ENCODE measurements at regions of chr10 and their contacts with region 1.

Region 1: GRCh38 chr10:2509081-2509531 is 558.2 kb upstream of the PFKP start:
- DNase-seq: no peak
- ATAC-seq: no peak
- H3K4me3 ChIP-seq: no peak overlapping the region
- H3K4me3 Mint-ChIP-seq: no peak overlapping the region
- H3K27ac ChIP-seq: no peak overlapping the region
- H3K27ac Mint-ChIP-seq: no peak overlapping the region
- H3K4me1 ChIP-seq: no peaks in the 10 kb centered on the region
- H3K4me1 Mint-ChIP-seq: no peaks in the 10 kb centered on the region
- H3K27me3 ChIP-seq: no peaks in the 10 kb centered on the region
- H3K27me3 Mint-ChIP-seq: peaks cover 2% of the 10 kb centered on the region
- CTCF ChIP-seq: no peak

Region 2: GRCh38 chr10:2490141-2490540 is 19.0 kb before region 1 on chr10:
- CTCF ChIA-PET with region 1: no interaction called
- POLR2A ChIA-PET with region 1: no interaction called
- intact Hi-C with region 1: loop called in 1 of 2 experiments (anchors 2 kb)
- DNase-seq: no peak
- ATAC-seq: no peak
- H3K4me3 ChIP-seq: no peak overlapping the region
- H3K4me3 Mint-ChIP-seq: no peak overlapping the region
- H3K27ac ChIP-seq: no peak overlapping the region
- H3K27ac Mint-ChIP-seq: no peak overlapping the region
- H3K4me1 ChIP-seq: no peaks in the 10 kb centered on the region
- H3K4me1 Mint-ChIP-seq: no peaks in the 10 kb centered on the region
- H3K27me3 ChIP-seq: no peaks in the 10 kb centered on the region
- H3K27me3 Mint-ChIP-seq: no peaks in the 10 kb centered on the region
- CTCF ChIP-seq: no peak

Region 3: DNA sequence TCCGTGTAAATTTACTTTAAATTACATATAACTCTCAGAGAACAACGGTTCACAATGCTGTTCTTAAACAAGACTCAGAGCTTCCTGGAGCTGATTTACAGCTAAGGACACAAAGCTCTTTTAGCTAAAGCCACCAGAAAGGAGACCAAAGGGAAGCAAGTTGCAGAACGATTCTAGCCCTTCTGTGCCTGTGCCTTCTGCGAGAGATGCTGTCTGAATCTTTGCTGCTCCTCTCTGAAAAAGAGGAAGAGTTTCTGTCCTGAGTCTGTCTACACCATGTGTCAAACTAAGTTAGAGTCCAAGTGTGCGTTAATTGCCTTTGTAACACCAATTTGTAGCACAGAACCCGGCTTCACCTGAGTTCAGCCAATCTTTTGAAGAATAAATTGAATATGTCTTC is 516.2 kb after region 1 on chr10:
- CTCF ChIA-PET with region 1: no interaction called
- POLR2A ChIA-PET with region 1: no interaction called
- intact Hi-C with region 1: no loop called
- DNase-seq: no peak
- ATAC-seq: no peak
- H3K4me3 ChIP-seq: no peak overlapping the region
- H3K4me3 Mint-ChIP-seq: no peak overlapping the region
- H3K27ac ChIP-seq: no peak overlapping the region
- H3K27ac Mint-ChIP-seq: no peak overlapping the region
- H3K4me1 ChIP-seq: no peaks in the 10 kb centered on the region
- H3K4me1 Mint-ChIP-seq: no peaks in the 10 kb centered on the region
- H3K27me3 ChIP-seq: peaks cover 0 to 4% of the 10 kb centered on the region in 2 experiments
- H3K27me3 Mint-ChIP-seq: peaks cover 23% of the 10 kb centered on the region
- CTCF ChIP-seq: no peak

Measured in CD8-positive, alpha-beta T cell (primary cell).